ENCODE measurements at regions of chrX and their contacts with region 1.

Region 1: DNA sequence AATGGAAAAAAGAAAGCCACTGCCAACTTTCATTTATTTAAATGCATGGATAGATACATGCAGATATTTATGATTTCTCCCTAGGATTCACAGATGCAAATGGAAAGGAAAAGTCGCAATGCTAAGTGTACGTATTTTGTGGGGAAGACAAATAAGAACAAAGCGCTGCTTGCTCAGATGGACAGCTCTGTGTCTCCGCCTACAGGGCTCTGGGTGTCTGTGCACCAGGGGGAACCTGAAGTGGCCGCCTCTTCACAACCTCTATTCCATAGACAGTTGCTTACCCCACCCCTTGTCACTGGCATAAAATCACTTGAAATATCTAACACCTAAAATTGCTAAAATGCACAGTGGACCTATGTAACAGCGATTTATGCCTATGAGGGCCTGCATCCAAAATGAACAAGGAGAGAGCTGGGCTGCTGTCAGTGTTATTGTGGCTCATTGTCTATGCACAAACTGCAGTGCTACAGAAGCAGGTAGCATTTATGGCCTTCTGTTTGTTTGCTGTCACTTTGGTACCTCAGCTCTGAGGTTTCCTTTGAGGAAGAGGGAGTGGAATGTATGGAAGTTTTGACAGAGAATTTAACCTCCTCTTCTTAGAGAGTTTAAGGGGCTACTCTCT is 58.6 kb upstream of the PAGE1 start:
- DNase-seq: peak; percentile 57
- H3K4me3 ChIP-seq: no peak overlapping the region
- H3K27ac ChIP-seq: no peak overlapping the region
- H3K4me1 ChIP-seq: no peaks in the 10 kb centered on the region
- H3K27me3 ChIP-seq: no peaks in the 10 kb centered on the region
- CTCF ChIP-seq: peak; percentile 84

Region 2: GRCh38 chrX:49291615-49292337 is 462.6 kb before region 1 on chrX:
- CTCF ChIA-PET with region 1: no interaction called
- POLR2A ChIA-PET with region 1: no interaction called
- intact Hi-C with region 1: loop called (anchors 1 kb)
- DNase-seq: peak; percentile 69
- H3K4me3 ChIP-seq: no peak overlapping the region
- H3K27ac ChIP-seq: no peak overlapping the region
- H3K4me1 ChIP-seq: no peaks in the 10 kb centered on the region
- H3K27me3 ChIP-seq: no peaks in the 10 kb centered on the region
- CTCF ChIP-seq: peak; percentile 84

Region 3: DNA sequence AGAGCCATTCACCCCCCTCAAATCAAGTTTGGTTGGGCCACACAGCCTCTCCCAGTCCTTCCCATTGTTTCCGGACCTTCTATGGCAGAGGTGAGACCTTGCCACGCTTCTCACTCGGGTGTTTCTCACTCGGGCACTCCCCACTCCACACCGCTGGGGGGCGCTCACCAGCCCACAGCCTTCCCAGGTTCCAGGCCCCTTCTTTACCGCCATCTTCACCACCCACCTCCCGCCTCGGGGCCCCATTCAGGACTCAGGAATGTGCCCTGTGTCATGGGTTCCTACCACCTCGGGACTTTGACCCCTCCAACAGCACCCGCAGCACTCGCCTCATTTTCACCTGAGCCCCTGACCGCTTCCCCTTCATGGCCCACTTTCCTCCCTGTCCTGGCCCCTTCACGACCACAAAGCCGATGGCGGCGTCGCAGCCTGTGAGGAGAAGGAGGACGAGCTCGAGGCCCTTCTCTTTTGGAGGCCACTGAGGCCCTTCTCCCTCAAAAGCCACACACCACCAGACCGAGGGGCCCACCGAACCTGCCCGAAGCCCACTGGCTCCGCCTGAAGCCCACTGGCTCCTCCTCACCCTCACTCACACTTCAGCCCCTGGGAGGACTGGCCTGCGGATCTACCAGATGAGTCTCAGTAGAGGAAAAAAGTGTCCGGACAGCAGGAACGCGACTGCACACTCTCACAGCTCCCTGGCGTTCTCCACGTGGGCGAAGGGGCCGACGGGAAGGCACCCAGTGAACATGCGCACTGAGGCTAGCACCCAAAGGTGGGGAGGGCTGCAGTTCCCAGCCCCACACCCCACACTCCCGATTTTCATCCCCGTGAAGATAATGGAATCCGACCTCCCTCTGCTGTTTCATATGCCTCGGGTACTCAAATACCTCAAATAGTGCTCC is 58.8 kb before region 1 on chrX and contains the start of gene PAGE1:
- CTCF ChIA-PET with region 1: no interaction called
- POLR2A ChIA-PET with region 1: no interaction called
- intact Hi-C with region 1: no loop called
- DNase-seq: no peak
- H3K4me3 ChIP-seq: no peak within 1 kb of the TSS
- H3K27ac ChIP-seq: no peak within 1 kb of the TSS
- H3K4me1 ChIP-seq: no peaks in the 10 kb centered on the region
- H3K27me3 ChIP-seq: no peaks in the 10 kb centered on the region
- CTCF ChIP-seq: no peak
- total RNA-seq, gene PAGE1: not detected in 2 replicates

Region 4: GRCh38 chrX:50952406-50952805 is 1198.1 kb after region 1 on chrX:
- CTCF ChIA-PET with region 1: no interaction called
- POLR2A ChIA-PET with region 1: no interaction called
- intact Hi-C with region 1: no loop called
- DNase-seq: no peak
- H3K4me3 ChIP-seq: no peak overlapping the region
- H3K27ac ChIP-seq: no peak overlapping the region
- H3K4me1 ChIP-seq: no peaks in the 10 kb centered on the region
- H3K27me3 ChIP-seq: no peaks in the 10 kb centered on the region
- CTCF ChIP-seq: no peak